Panc1 (cell line): ENCODE measurements at regions of chr2 and their contacts with region 1.

Region 1: DNA sequence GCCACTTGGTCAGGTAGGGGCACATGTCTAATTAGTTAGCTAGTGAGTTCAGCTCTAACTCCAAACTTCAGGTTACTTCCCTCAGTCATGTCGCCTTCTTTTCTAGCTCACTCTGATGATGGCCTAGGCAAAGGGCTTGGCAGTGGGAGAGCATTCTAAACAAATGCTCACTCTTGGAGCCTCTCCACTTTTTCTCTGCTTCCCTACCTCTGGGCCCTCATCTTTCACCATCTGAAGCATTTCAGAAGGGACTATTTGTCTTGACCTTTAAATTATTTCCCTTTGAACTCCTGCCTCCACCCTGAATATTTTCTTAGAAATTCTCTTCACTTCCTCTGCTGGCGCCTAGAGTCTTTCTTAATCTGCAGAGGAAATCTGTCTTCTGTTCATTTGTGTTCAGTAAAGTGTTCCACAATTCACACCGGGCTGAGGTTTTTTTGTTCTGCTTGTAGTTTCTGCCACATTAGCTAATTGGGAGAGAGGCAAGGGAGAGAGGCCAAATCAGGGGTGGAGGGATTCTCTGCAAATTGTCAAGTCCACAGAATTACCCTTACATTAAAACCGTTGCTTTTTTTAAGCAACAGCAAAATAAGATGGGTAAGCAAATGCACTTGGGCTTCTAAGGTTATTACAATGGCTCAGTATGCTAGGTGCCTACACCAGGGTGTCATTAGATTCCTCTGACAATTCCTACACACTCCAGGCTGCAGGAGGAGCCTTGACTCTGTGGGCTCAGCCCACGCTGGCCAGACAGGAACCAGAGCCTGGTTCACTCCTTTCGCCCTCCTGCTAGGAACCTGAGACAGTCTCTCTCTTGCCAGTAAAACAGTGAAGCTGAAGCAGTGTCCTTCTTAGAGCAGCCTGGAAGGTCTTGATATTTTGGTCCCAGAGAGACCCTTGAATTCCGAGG is 5.5 kb downstream of the MSGN1 start:
- DNase-seq: no peak
- ATAC-seq: no peak
- H3K4me3 ChIP-seq: no peak overlapping the region
- H3K27ac ChIP-seq: no peak overlapping the region
- H3K4me1 ChIP-seq: no peaks in the 10 kb centered on the region
- H3K27me3 ChIP-seq: peaks cover 2% of the 10 kb centered on the region
- CTCF ChIP-seq: no peak

Region 2: GRCh38 chr2:17455343-17455742 is 366.4 kb before region 1 on chr2:
- CTCF ChIA-PET with region 1: no interaction called
- POLR2A ChIA-PET with region 1: no interaction called
- in situ Hi-C with region 1: no loop called
- intact Hi-C with region 1: no loop called
- DNase-seq: no peak
- ATAC-seq: no peak
- H3K4me3 ChIP-seq: no peak overlapping the region
- H3K27ac ChIP-seq: no peak overlapping the region
- H3K4me1 ChIP-seq: no peaks in the 10 kb centered on the region
- H3K27me3 ChIP-seq: no peaks in the 10 kb centered on the region
- CTCF ChIP-seq: no peak

Region 3: GRCh38 chr2:17592731-17593409 is 228.9 kb before region 1 on chr2:
- CTCF ChIA-PET with region 1: interaction called, 17 read pairs
- POLR2A ChIA-PET with region 1: no interaction called
- in situ Hi-C with region 1: no loop called
- intact Hi-C with region 1: no loop called
- DNase-seq: no peak
- ATAC-seq: no peak
- H3K4me3 ChIP-seq: no peak overlapping the region
- H3K27ac ChIP-seq: no peak overlapping the region
- H3K4me1 ChIP-seq: no peaks in the 10 kb centered on the region
- H3K27me3 ChIP-seq: peaks cover 2% of the 10 kb centered on the region; the same call in 1 of the 2 replicates
- CTCF ChIP-seq: no peak

Region 4: DNA sequence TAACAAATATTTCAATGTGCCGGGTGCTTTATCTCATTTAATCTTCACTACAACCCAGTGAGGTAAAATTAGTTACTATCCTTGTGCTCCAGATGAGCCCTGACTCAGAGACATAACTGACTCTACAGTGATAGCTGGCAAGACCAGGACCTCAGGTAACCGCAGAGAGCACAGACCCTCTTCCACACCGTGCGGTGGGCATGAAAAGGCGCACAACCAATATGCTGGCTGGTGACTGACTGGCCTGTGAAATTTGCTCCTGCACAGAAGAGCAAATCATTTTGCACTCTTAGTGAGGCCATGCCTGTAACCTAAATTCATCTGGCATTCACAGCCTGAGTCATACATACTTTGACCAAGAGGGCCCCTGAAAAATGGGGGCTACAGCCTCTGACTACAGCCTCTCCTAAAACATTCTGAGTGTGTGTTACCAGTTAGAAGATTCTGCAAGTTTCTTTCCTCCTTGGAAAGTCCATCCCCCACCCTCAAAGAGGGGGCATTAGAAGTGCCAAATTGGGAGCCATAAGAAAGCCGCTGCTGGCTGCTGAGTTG is 27.9 kb before region 1 on chr2:
- CTCF ChIA-PET with region 1: no interaction called
- POLR2A ChIA-PET with region 1: interaction called, 10 read pairs
- in situ Hi-C with region 1: no loop called
- intact Hi-C with region 1: no loop called
- DNase-seq: no peak
- ATAC-seq: no peak
- H3K4me3 ChIP-seq: no peak overlapping the region
- H3K27ac ChIP-seq: no peak overlapping the region
- H3K4me1 ChIP-seq: no peaks in the 10 kb centered on the region
- H3K27me3 ChIP-seq: no peaks in the 10 kb centered on the region; the same call in 1 of the 2 replicates
- CTCF ChIP-seq: no peak